CD14-positive monocyte (primary cell): ENCODE measurements at regions of chr12 and their contacts with region 1.

Region 1: GRCh38 chr12:130334937-130335336 is 2.8 kb upstream of the PIWIL1 start:
- DNase-seq: no peak
- H3K4me3 ChIP-seq: no peak overlapping the region
- H3K4me3 Mint-ChIP-seq: no peak overlapping the region
- H3K27ac ChIP-seq: no peak overlapping the region
- H3K27ac Mint-ChIP-seq: no peak overlapping the region
- H3K4me1 ChIP-seq: no peaks in the 10 kb centered on the region
- H3K4me1 Mint-ChIP-seq: no peaks in the 10 kb centered on the region
- H3K27me3 ChIP-seq: peaks cover 0 to 13% of the 10 kb centered on the region in 2 donors
- H3K27me3 Mint-ChIP-seq: peaks cover 10 to 14% (median 11%) of the 10 kb centered on the region in 3 donors
- CTCF ChIP-seq: no peak

Region 2: DNA sequence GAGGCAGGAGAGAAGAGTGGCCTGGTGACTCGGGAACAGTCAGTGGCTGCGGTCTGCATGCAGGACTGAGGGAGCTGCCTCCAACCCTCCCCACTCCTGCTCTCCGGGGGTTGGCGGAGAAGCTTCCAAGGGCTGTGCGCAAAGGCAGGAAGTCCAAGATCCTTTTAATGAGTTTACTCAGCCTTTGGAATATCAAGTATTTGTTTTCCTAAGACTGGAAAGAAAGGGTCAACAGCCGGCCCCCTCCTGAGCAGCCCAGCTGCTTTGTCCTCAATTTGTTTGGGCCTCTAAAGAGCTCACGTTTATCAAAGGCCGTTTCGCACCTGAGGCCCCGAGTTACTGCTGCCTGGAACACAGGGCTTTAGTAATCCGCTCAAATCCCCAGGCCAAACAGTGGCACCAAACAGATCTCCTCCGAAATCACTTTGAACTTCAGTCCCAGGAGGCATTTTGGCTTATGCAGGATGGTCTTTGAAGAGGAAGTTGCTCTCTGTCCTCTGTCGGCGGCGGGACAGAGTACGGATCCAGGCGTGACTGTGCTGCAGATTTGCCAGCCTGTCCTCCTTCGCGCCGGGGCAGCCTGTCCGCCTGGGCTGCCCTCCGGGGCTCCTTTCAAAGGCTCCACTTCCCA is 289.8 kb before region 1 on chr12:
- intact Hi-C with region 1: loop called (anchors 5 kb)
- DNase-seq: no peak
- H3K4me3 ChIP-seq: no peak overlapping the region
- H3K4me3 Mint-ChIP-seq: peak overlapping the region in 1 of 2 donors; percentile 49
- H3K27ac ChIP-seq: no peak overlapping the region
- H3K27ac Mint-ChIP-seq: no peak overlapping the region
- H3K4me1 ChIP-seq: no peaks in the 10 kb centered on the region
- H3K4me1 Mint-ChIP-seq: no peaks in the 10 kb centered on the region
- H3K27me3 ChIP-seq: peaks cover 0 to 19% of the 10 kb centered on the region in 2 donors
- H3K27me3 Mint-ChIP-seq: peaks cover 28 to 37% (median 29%) of the 10 kb centered on the region in 3 donors
- CTCF ChIP-seq: no peak

Region 3: GRCh38 chr12:130053651-130054069 is 281.3 kb before region 1 on chr12:
- intact Hi-C with region 1: loop called (anchors 5 kb)
- DNase-seq: no peak
- H3K4me3 ChIP-seq: no peak overlapping the region
- H3K4me3 Mint-ChIP-seq: no peak overlapping the region
- H3K27ac ChIP-seq: no peak overlapping the region
- H3K27ac Mint-ChIP-seq: no peak overlapping the region
- H3K4me1 ChIP-seq: no peaks in the 10 kb centered on the region
- H3K4me1 Mint-ChIP-seq: no peaks in the 10 kb centered on the region
- H3K27me3 ChIP-seq: no peaks in the 10 kb centered on the region
- H3K27me3 Mint-ChIP-seq: peaks cover 2 to 12% (median 5%) of the 10 kb centered on the region in 3 donors
- CTCF ChIP-seq: no peak

Region 4: GRCh38 chr12:130281153-130281799 is 53.7 kb before region 1 on chr12:
- intact Hi-C with region 1: no loop called
- DNase-seq: peak in 1 of 3 donors; percentile 10
- H3K4me3 ChIP-seq: no peak overlapping the region
- H3K4me3 Mint-ChIP-seq: no peak overlapping the region
- H3K27ac ChIP-seq: no peak overlapping the region
- H3K27ac Mint-ChIP-seq: no peak overlapping the region
- H3K4me1 ChIP-seq: no peaks in the 10 kb centered on the region
- H3K4me1 Mint-ChIP-seq: peaks cover 4% of the 10 kb centered on the region
- H3K27me3 ChIP-seq: no peaks in the 10 kb centered on the region
- H3K27me3 Mint-ChIP-seq: peaks cover 0 to 1% (median 0%) of the 10 kb centered on the region in 3 donors
- CTCF ChIP-seq: peak; percentile 78

Region 5: GRCh38 chr12:130555628-130556485 is 220.9 kb after region 1 on chr12:
- intact Hi-C with region 1: no loop called
- DNase-seq: no peak
- H3K4me3 ChIP-seq: no peak overlapping the region
- H3K4me3 Mint-ChIP-seq: no peak overlapping the region
- H3K27ac ChIP-seq: no peak overlapping the region
- H3K27ac Mint-ChIP-seq: no peak overlapping the region
- H3K4me1 ChIP-seq: no peaks in the 10 kb centered on the region
- H3K4me1 Mint-ChIP-seq: no peaks in the 10 kb centered on the region
- H3K27me3 ChIP-seq: no peaks in the 10 kb centered on the region
- H3K27me3 Mint-ChIP-seq: peaks cover 3 to 4% (median 4%) of the 10 kb centered on the region in 3 donors
- CTCF ChIP-seq: no peak